ENCODE measurements at regions of chr6 and their contacts with region 1.

Region 1: GRCh38 chr6:47278550-47278949 is 31.2 kb downstream of the TNFRSF21 start:
- DNase-seq: peak; percentile 75 to 77
- H3K4me3 ChIP-seq: no peak overlapping the region
- H3K4me3 Mint-ChIP-seq: peak overlapping the region; percentile 9
- H3K27ac Mint-ChIP-seq: peak overlapping the region; percentile 83
- H3K4me1 ChIP-seq: peaks cover 35% of the 10 kb centered on the region
- H3K4me1 Mint-ChIP-seq: peaks cover 24% of the 10 kb centered on the region
- H3K27me3 ChIP-seq: no peaks in the 10 kb centered on the region
- H3K27me3 Mint-ChIP-seq: no peaks in the 10 kb centered on the region
- CTCF ChIP-seq: no peak

Region 2: DNA sequence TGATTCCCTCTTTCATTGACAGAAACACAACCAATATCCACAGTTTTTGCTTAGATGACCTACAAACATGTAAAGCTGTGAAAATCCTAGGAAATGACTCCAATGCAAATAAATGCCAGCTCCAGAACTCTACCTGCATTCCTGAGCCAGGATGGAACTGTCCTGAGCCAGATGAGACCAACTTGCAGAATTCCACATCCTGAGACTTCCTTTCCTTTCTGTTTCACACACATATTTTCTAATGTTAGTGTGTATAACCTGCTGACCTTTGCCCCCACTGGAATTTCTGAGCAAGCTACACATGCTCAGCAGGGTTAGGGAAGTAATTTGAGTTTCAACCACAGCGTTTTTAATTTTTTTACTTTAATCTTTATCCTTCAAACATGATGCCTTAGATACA is 166.9 kb before region 1 on chr6:
- CTCF ChIA-PET with region 1: no interaction called
- POLR2A ChIA-PET with region 1: no interaction called
- intact Hi-C with region 1: loop called (anchors 1 kb)
- DNase-seq: peak; percentile 72 to 88
- H3K4me3 ChIP-seq: no peak overlapping the region
- H3K4me3 Mint-ChIP-seq: peak overlapping the region; percentile 36
- H3K27ac Mint-ChIP-seq: peak overlapping the region; percentile 68
- H3K4me1 ChIP-seq: peaks cover 65% of the 10 kb centered on the region
- H3K4me1 Mint-ChIP-seq: peaks cover 36% of the 10 kb centered on the region
- H3K27me3 ChIP-seq: no peaks in the 10 kb centered on the region
- H3K27me3 Mint-ChIP-seq: no peaks in the 10 kb centered on the region
- CTCF ChIP-seq: no peak

Region 3: DNA sequence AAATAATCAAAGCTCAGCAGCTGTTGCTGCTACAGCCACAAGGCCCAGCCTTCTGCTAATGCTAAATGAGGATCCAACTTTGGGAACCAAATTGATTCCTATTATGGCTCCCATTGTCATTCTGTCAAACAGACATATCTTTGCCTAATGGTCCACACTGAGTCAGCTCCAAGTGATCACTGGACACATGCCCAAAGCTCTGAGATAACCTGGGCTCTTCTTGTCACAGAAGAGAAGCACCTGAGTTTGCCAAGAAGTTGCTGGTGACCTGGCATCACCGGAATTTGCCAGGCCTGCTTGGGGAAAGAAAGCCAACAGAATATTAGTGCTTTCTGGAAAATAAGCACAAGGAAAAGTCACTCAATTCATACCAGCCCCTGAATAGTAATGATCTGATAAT is 25.3 kb after region 1 on chr6:
- CTCF ChIA-PET with region 1: no interaction called
- POLR2A ChIA-PET with region 1: no interaction called
- intact Hi-C with region 1: loop called (anchors 1 kb)
- DNase-seq: no peak
- H3K4me3 ChIP-seq: no peak overlapping the region
- H3K4me3 Mint-ChIP-seq: no peak overlapping the region
- H3K27ac Mint-ChIP-seq: no peak overlapping the region
- H3K4me1 ChIP-seq: peaks cover 59% of the 10 kb centered on the region
- H3K4me1 Mint-ChIP-seq: peaks cover 41% of the 10 kb centered on the region
- H3K27me3 ChIP-seq: no peaks in the 10 kb centered on the region
- H3K27me3 Mint-ChIP-seq: no peaks in the 10 kb centered on the region
- CTCF ChIP-seq: no peak

Region 4: GRCh38 chr6:47309291-47310130 is 31.0 kb after region 1 on chr6 and contains the start of gene TNFRSF21:
- CTCF ChIA-PET with region 1: no interaction called
- POLR2A ChIA-PET with region 1: no interaction called
- intact Hi-C with region 1: loop called (anchors 1 kb)
- DNase-seq: peak; percentile 93 to 95
- H3K4me3 ChIP-seq: peak within 1 kb of the TSS; percentile 91
- H3K4me3 Mint-ChIP-seq: peak within 1 kb of the TSS; percentile 88
- H3K27ac Mint-ChIP-seq: peak within 1 kb of the TSS; percentile 80
- H3K4me1 ChIP-seq: peaks cover 33% of the 10 kb centered on the region
- H3K4me1 Mint-ChIP-seq: peaks cover 18% of the 10 kb centered on the region
- H3K27me3 ChIP-seq: no peaks in the 10 kb centered on the region
- H3K27me3 Mint-ChIP-seq: no peaks in the 10 kb centered on the region
- CTCF ChIP-seq: peak; percentile 92 to 96
- total RNA-seq, gene TNFRSF21: 60.8 and 64.4 TPM in 2 replicates